ENCODE measurements at regions of chr3 and their contacts with region 1.

Region 1: GRCh38 chr3:127857333-127857732 is 35.0 kb upstream of the MGLL start:
- DNase-seq: no peak
- ATAC-seq: no peak
- H3K4me3 ChIP-seq: no peak overlapping the region
- H3K27ac ChIP-seq: no peak overlapping the region
- H3K4me1 ChIP-seq: no peaks in the 10 kb centered on the region
- H3K27me3 ChIP-seq: no peaks in the 10 kb centered on the region
- CTCF ChIP-seq: no peak
- POLR2A ChIP-seq: no peak

Region 2: DNA sequence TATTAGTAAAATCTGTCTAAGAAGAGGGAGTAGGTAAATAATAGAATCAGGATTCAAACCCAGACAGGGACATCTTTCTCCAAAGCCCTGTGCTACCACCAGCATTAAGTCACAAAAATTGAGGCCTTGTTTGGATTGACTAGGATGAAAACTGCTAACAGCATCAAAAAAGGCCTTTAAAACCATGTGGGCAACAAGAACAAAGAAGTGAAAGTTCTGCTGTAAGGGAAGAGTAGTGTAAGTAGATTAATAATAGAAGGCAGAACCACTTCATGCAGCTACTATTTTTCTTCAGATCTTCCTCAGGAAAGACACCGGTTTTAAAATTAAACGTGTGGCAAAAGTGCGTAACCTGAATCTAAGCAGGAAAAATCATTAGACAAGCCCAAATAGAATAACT is 42.4 kb after region 1 on chr3:
- intact Hi-C with region 1: no loop called
- DNase-seq: no peak
- ATAC-seq: no peak
- H3K4me3 ChIP-seq: no peak overlapping the region
- H3K27ac ChIP-seq: no peak overlapping the region
- H3K4me1 ChIP-seq: no peaks in the 10 kb centered on the region
- H3K27me3 ChIP-seq: no peaks in the 10 kb centered on the region
- CTCF ChIP-seq: no peak
- POLR2A ChIP-seq: no peak

Region 3: GRCh38 chr3:127953091-127954035 is 96.0 kb after region 1 on chr3:
- intact Hi-C with region 1: loop called (anchors 5 kb)
- DNase-seq: no peak
- ATAC-seq: no peak
- H3K4me3 ChIP-seq: no peak overlapping the region
- H3K27ac ChIP-seq: no peak overlapping the region
- H3K4me1 ChIP-seq: no peaks in the 10 kb centered on the region
- H3K27me3 ChIP-seq: no peaks in the 10 kb centered on the region
- CTCF ChIP-seq: no peak
- POLR2A ChIP-seq: no peak